BJ (cell line): ENCODE measurements at regions of chr11 and their contacts with region 1.

Region 1: GRCh38 chr11:62081378-62082291 is 42.2 kb upstream of the INCENP start:
- DNase-seq: peak; percentile 19
- H3K4me3 ChIP-seq: no peak overlapping the region
- H3K27me3 ChIP-seq: no peaks in the 10 kb centered on the region
- CTCF ChIP-seq: peak; percentile 87

Region 2: GRCh38 chr11:61881397-61881796 is 200.2 kb before region 1 on chr11:
- CTCF ChIA-PET with region 1: interaction called, 13 read pairs
- POLR2A ChIA-PET with region 1: no interaction called
- DNase-seq: no peak
- H3K4me3 ChIP-seq: no peak overlapping the region
- H3K27me3 ChIP-seq: no peaks in the 10 kb centered on the region
- CTCF ChIP-seq: no peak

Region 3: GRCh38 chr11:61923166-61924063 is 158.2 kb before region 1 on chr11:
- CTCF ChIA-PET with region 1: interaction called, 11 read pairs
- POLR2A ChIA-PET with region 1: no interaction called
- DNase-seq: peak; percentile 69
- H3K4me3 ChIP-seq: no peak overlapping the region
- H3K27me3 ChIP-seq: no peaks in the 10 kb centered on the region
- CTCF ChIP-seq: no peak

Region 4: DNA sequence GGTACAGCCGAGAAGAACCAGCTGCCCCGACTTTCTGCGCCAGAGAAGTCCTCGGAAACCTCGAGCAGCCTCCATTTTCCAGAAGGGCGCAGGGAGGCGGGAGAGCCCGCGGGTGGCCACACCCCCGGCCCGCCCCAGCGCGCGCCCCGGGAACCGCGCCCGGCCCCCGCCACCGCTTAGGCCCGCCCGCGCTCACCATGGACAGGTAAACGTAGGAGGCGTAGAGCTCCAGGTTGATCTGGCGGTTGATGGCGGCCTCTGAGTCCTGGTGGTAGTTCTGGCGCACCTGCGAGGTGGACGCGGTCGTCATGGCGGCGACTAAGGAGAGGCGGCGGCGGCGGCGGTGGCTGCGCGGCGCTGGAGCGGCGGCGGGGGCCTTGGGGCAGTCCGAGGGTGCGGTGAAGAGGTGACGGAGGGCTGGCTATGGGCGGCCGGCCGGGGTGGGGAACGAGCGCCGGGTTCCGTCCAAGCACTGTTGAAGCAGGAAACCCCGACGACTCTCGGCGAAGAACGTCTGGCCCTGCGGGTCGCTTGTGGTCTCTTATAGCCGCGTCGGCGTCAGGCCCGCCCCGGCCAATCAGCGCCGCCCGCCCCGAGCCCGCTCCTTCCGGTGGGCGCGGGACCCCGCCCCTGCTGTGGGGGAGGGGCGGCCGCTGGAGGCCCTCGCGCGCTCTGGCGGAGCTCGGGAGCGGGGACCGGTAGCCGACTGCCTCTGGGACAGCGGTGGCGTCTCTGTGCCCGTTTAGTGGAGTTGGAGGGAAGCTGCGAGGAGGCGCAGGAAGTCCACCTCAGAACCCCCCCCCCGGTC is 114.3 kb before region 1 on chr11 and contains the start of gene FTH1:
- CTCF ChIA-PET with region 1: interaction called, 42 read pairs
- POLR2A ChIA-PET with region 1: interaction called, 7 read pairs
- DNase-seq: peak; percentile 51
- H3K4me3 ChIP-seq: peak within 1 kb of the TSS; percentile 83
- H3K27me3 ChIP-seq: no peaks in the 10 kb centered on the region
- CTCF ChIP-seq: no peak
- polyA plus RNA-seq, gene FTH1: 1,472 and 1,806 TPM in 2 replicates

Region 5: DNA sequence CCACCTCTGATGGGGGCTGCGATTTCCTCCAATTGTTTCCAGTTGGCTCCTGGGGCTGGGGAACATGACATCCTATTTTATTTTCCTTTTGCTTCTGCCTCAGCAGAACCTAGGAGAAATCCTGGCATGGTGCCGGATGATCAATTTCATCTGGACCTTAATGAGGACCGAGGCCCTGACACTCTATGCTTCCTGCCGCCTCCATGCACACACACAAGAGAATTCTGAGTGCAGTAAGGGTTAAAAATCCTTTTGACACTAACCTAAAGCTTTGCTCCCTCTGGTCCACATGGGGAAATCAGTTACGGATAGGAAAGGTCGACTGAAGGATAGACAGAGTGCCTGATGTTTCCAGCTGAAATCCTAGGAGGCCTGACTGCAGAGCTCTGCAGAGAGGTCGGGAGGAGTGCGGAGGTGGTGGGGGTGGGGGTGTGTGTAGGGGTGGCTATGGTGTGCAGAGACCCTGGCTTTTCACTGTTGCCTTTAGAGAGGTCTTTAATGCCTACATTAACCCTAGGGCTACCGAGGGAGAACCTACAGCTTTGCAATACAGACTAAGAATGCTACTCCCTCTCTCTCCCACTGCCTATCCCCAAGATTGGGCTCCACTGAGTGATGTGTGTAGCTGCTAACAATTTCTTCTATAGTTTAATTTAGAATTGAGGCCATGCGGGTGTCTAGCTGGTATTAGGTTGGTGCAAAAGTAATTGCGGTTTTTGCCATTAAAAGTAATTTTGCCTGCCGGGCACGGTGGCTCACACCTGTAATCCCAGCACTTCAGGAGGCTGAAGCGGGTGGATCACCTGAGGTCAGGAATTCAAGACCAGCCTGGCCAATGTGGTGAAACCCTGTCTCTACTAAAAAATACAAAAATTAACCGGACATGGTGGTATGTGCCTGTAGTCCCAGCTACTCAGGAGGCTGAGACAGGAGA is 11.4 kb before region 1 on chr11:
- CTCF ChIA-PET with region 1: interaction called, 44 read pairs
- POLR2A ChIA-PET with region 1: no interaction called
- DNase-seq: no peak
- H3K4me3 ChIP-seq: no peak overlapping the region
- H3K27me3 ChIP-seq: peaks cover 4% of the 10 kb centered on the region; the same call in 1 of the 2 replicates
- CTCF ChIP-seq: no peak